Activated CD4-positive, alpha-beta T cell treated with anti-CD3 and anti-CD28 coated beads for 36 hours (primary cell): ENCODE measurements at regions of chr19 and their contacts with region 1.

Region 1: GRCh38 chr19:47035127-47036096 is 13.0 kb downstream of the TMEM160 start:
- DNase-seq: peak; percentile 96
- ATAC-seq: peak; percentile 93
- H3K4me3 Mint-ChIP-seq: peak overlapping the region; percentile 73
- H3K27ac Mint-ChIP-seq: peak overlapping the region; percentile 80
- H3K4me1 Mint-ChIP-seq: peaks cover 22% of the 10 kb centered on the region
- H3K27me3 Mint-ChIP-seq: peaks cover 4% of the 10 kb centered on the region

Region 2: GRCh38 chr19:46622118-46622446 is 413.3 kb before region 1 on chr19:
- CTCF ChIA-PET with region 1: no interaction called
- POLR2A ChIA-PET with region 1: no interaction called
- intact Hi-C with region 1: no loop called
- DNase-seq: no peak
- ATAC-seq: no peak
- H3K4me3 Mint-ChIP-seq: peak overlapping the region; percentile 66
- H3K27ac Mint-ChIP-seq: peak overlapping the region; percentile 66
- H3K4me1 Mint-ChIP-seq: peaks cover 65% of the 10 kb centered on the region
- H3K27me3 Mint-ChIP-seq: no peaks in the 10 kb centered on the region

Region 3: GRCh38 chr19:46634045-46634655 is 401.3 kb before region 1 on chr19:
- CTCF ChIA-PET with region 1: no interaction called
- POLR2A ChIA-PET with region 1: no interaction called
- intact Hi-C with region 1: loop called in 1 of 2 experiments (anchors 1 kb)
- DNase-seq: peak; percentile 99
- ATAC-seq: peak; percentile 63
- H3K4me3 Mint-ChIP-seq: peak overlapping the region; percentile 73
- H3K27ac Mint-ChIP-seq: peak overlapping the region; percentile 72
- H3K4me1 Mint-ChIP-seq: peaks cover 21% of the 10 kb centered on the region
- H3K27me3 Mint-ChIP-seq: no peaks in the 10 kb centered on the region

Region 4: GRCh38 chr19:46860125-46860845 is 175.1 kb before region 1 on chr19:
- CTCF ChIA-PET with region 1: interaction called, 3 read pairs
- POLR2A ChIA-PET with region 1: no interaction called
- intact Hi-C with region 1: loop called in 1 of 2 experiments (anchors 1 kb)
- DNase-seq: peak; percentile 99
- ATAC-seq: peak; percentile 82
- H3K4me3 Mint-ChIP-seq: no peak overlapping the region
- H3K27ac Mint-ChIP-seq: peak overlapping the region; percentile 78
- H3K4me1 Mint-ChIP-seq: peaks cover 25% of the 10 kb centered on the region
- H3K27me3 Mint-ChIP-seq: no peaks in the 10 kb centered on the region

Region 5: DNA sequence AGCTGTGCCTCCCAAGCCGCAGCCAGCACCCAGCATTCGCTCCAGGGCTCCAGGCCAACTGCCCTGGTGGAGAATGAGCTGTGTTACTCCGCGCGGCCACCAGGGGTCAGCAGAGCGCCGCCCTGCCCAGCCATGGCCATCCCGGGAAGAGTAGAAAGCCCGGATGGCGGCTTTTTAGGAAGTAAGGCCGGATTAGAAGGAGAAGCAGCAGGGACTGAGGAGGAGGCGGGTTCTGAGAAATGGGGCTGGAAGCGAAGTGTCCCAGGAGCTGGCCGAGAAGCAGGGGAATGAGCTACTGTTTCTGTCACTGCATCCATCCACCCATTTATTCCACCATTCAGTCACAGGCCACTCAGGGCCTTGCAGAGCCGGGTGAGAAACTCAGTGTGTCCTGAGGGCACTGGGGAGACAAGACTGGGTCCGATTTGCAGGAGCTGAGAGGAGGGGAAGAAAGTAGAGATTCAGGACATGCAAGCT is 22.3 kb before region 1 on chr19:
- CTCF ChIA-PET with region 1: interaction called, 35 read pairs
- POLR2A ChIA-PET with region 1: no interaction called
- intact Hi-C with region 1: loop called (anchors 1 kb)
- DNase-seq: peak; percentile 79
- ATAC-seq: peak; percentile 87
- H3K4me3 Mint-ChIP-seq: no peak overlapping the region
- H3K27ac Mint-ChIP-seq: no peak overlapping the region
- H3K4me1 Mint-ChIP-seq: peaks cover 7% of the 10 kb centered on the region
- H3K27me3 Mint-ChIP-seq: no peaks in the 10 kb centered on the region

Region 6: GRCh38 chr19:47124937-47125668 is 89.7 kb after region 1 on chr19:
- CTCF ChIA-PET with region 1: no interaction called
- POLR2A ChIA-PET with region 1: no interaction called
- intact Hi-C with region 1: loop called (anchors 1 to 2 kb)
- DNase-seq: peak; percentile 14
- ATAC-seq: peak; percentile 64
- H3K4me3 Mint-ChIP-seq: no peak overlapping the region
- H3K27ac Mint-ChIP-seq: peak overlapping the region; percentile 20
- H3K4me1 Mint-ChIP-seq: peaks cover 3% of the 10 kb centered on the region
- H3K27me3 Mint-ChIP-seq: no peaks in the 10 kb centered on the region

Region 7: DNA sequence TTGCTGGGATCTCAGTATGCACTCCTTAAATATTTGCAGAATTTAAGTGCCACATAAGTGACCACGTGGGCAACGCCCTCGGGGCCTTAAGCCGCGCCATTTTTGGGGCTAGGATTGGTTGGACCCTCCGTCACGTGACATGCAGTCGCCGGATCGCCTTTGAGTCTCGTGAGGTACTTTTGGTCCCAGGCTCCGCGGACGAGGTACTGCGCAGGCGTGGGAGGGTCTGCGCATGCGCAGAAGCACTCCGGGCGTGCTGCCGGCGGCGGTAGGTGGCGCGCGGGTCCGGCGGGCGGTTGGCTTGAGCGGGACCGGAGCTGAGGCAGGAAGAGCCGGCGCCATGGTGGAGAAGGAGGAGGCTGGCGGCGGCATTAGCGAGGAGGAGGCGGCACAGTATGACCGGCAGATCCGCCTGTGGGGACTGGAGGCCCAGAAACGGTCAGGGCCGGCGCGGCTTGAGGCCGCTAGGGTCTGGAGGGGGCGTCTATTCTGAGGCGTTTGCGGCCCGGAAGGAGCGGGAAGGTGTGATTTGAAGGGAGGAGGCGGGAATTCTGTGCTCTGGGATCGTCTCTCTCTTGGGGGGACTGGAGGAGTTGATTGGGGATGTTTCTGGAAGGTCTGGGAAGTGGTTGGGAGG is 95.3 kb after region 1 on chr19 and contains the start of gene SAE1:
- CTCF ChIA-PET with region 1: no interaction called
- POLR2A ChIA-PET with region 1: no interaction called
- intact Hi-C with region 1: loop called (anchors 1 to 2 kb)
- DNase-seq: peak; percentile 95
- ATAC-seq: peak; percentile 89
- H3K4me3 Mint-ChIP-seq: peak within 1 kb of the TSS; percentile 99
- H3K27ac Mint-ChIP-seq: peak within 1 kb of the TSS; percentile 97
- H3K4me1 Mint-ChIP-seq: peaks cover 41% of the 10 kb centered on the region
- H3K27me3 Mint-ChIP-seq: no peaks in the 10 kb centered on the region
- total RNA-seq, gene SAE1: 143 to 156 TPM

Region 8: GRCh38 chr19:47225746-47226425 is 190.5 kb after region 1 on chr19:
- CTCF ChIA-PET with region 1: interaction called, 3 read pairs
- POLR2A ChIA-PET with region 1: no interaction called
- intact Hi-C with region 1: loop called in 1 of 2 experiments (anchors 1 kb)
- DNase-seq: peak; percentile 93
- ATAC-seq: peak; percentile 70
- H3K4me3 Mint-ChIP-seq: peak overlapping the region; percentile 77
- H3K27ac Mint-ChIP-seq: no peak overlapping the region
- H3K4me1 Mint-ChIP-seq: peaks cover 16% of the 10 kb centered on the region
- H3K27me3 Mint-ChIP-seq: no peaks in the 10 kb centered on the region